Calu3 (cell line): ENCODE measurements at regions of chr7 and their contacts with region 1.

Region 1: DNA sequence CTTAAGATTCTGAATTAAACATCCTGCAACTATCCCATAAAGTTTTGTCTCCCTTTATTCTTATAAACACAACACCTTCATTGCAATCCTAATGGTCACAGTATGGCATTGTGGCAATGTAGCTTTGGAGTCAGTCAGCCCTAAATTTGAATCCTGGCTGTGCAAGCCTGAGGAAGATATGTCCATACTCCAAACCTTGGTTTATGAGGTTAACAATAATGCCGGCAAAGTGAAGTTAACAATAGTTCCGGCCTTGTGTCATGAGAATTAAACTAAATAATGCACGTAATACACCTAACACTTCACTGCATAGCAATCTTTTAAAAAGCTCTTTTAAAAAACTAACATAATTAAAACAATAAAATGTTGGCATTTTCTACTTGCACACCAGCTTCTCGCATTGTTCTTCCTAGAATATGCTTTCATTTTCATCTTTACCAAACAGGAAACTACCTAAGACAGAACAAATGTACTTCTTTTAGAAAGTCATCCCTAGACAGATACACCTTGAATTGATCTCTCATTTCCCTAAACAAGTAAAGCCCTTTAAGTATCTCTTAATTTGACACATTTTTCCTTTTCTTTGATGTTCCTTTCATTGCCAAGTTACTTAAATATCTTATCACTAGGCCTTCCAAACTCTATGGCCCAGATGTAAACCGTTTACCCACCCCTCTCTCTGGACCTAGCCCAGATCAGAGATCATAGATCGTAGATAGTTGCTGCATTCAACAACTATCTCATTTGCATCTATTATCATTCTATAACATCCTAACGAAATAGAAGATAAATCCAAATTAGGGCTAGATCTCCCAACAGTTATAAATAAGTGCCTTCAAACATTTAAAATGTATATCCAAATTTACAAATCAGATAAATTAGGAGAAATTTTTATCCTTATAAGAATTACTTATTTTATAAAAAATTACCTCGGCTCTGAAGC is 66.7 kb downstream of the CREB3L2 start:
- DNase-seq: no peak
- H3K4me3 Mint-ChIP-seq: no peak overlapping the region
- H3K27ac Mint-ChIP-seq: no peak overlapping the region
- H3K4me1 Mint-ChIP-seq: peaks cover 55% of the 10 kb centered on the region
- H3K27me3 Mint-ChIP-seq: no peaks in the 10 kb centered on the region
- CTCF ChIP-seq: no peak

Region 2: GRCh38 chr7:137898839-137899721 is 36.1 kb before region 1 on chr7:
- CTCF ChIA-PET with region 1: no interaction called
- intact Hi-C with region 1: no loop called
- DNase-seq: peak; percentile 86
- H3K4me3 Mint-ChIP-seq: no peak overlapping the region
- H3K27ac Mint-ChIP-seq: no peak overlapping the region
- H3K4me1 Mint-ChIP-seq: peaks cover 8% of the 10 kb centered on the region
- H3K27me3 Mint-ChIP-seq: no peaks in the 10 kb centered on the region
- CTCF ChIP-seq: peak; percentile 83

Region 3: GRCh38 chr7:138021889-138022288 is 86.7 kb after region 1 on chr7:
- CTCF ChIA-PET with region 1: interaction called, 14 read pairs
- intact Hi-C with region 1: no loop called
- DNase-seq: no peak
- H3K4me3 Mint-ChIP-seq: no peak overlapping the region
- H3K27ac Mint-ChIP-seq: no peak overlapping the region
- H3K4me1 Mint-ChIP-seq: peaks cover 8% of the 10 kb centered on the region
- H3K27me3 Mint-ChIP-seq: no peaks in the 10 kb centered on the region
- CTCF ChIP-seq: no peak